HCT116 (cell line): ENCODE measurements at regions of chr5 and their contacts with region 1.

Region 1: GRCh38 chr5:98796197-98796972 is 22.9 kb downstream of the RGMB start:
- DNase-seq: no peak
- ATAC-seq: peak; percentile 85
- H3K4me3 ChIP-seq: no peak overlapping the region
- H3K27ac ChIP-seq: no peak overlapping the region
- H3K4me1 ChIP-seq: no peaks in the 10 kb centered on the region
- H3K27me3 ChIP-seq: no peaks in the 10 kb centered on the region
- CTCF ChIP-seq: peak; percentile 53 to 89 (median 79); a peak in 5 of 6 replicates
- POLR2A ChIP-seq: no peak
- RAD21 ChIP-seq: peak; percentile 70

Region 2: GRCh38 chr5:97297063-97297703 is 1499.2 kb before region 1 on chr5:
- CTCF ChIA-PET with region 1: interaction called, 5 read pairs
- POLR2A ChIA-PET with region 1: no interaction called
- RAD21 ChIA-PET with region 1: no interaction called
- intact Hi-C with region 1: loop called (anchors 10 kb)
- DNase-seq: peak; percentile 60
- ATAC-seq: peak; percentile 100
- H3K4me3 ChIP-seq: no peak overlapping the region
- H3K27ac ChIP-seq: no peak overlapping the region
- H3K4me1 ChIP-seq: no peaks in the 10 kb centered on the region
- H3K27me3 ChIP-seq: no peaks in the 10 kb centered on the region
- CTCF ChIP-seq: peak; percentile 65 to 94 (median 72)
- POLR2A ChIP-seq: no peak
- RAD21 ChIP-seq: peak; percentile 77

Region 3: GRCh38 chr5:98776066-98776705 is 20.2 kb before region 1 on chr5:
- CTCF ChIA-PET with region 1: no interaction called
- POLR2A ChIA-PET with region 1: no interaction called
- RAD21 ChIA-PET with region 1: no interaction called
- intact Hi-C with region 1: no loop called
- DNase-seq: no peak
- ATAC-seq: no peak
- H3K4me3 ChIP-seq: no peak overlapping the region
- H3K27ac ChIP-seq: no peak overlapping the region
- H3K4me1 ChIP-seq: peaks cover 19 to 30% of the 10 kb centered on the region in 2 experiments
- H3K27me3 ChIP-seq: no peaks in the 10 kb centered on the region
- CTCF ChIP-seq: no peak
- POLR2A ChIP-seq: no peak
- RAD21 ChIP-seq: no peak